ENCODE measurements at regions of chr9 and their contacts with region 1.

Region 1: DNA sequence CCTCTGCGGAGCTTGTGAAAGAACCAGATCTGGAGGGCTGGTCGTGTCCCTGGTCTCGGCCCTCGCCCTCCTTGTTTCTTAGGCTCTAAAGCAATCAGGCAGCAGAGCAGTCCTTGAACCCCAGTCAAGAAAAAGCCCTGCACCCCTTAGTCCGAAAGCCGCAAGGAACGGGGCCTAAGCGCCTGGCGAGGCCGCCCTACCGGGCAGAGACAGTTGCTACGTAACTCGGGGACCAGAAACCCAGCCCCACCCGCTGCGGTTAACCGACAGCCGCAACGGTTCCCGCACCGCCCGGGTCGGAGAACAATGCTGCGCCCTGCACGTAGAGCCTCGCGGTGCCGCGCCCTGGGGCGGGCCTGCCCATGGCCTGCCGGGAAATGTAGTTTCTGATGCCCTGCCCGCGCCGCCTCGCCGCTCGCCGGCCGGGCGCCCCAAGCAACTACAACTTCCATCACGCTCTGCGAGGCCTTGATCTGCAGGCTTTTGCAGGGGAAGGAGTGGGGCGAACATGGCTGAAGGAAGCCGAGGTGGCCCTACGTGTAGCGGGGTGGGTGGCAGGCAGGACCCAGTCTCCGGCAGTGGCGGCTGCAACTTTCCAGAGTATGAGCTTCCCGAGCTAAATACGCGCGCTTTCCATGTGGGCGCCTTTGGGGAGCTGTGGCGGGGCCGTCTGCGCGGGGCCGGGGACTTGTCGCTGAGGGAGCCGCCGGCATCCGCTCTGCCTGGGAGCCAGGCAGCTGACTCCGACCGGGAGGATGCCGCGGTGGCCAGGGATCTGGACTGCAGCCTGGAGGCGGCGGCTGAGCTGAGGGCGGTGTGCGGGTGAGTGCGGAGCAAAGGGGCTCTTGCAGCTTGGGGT is at the start of gene SNAPC3:
- DNase-seq: peak; percentile 94 to 97
- ATAC-seq: peak; percentile 99
- H3K4me3 ChIP-seq: peak within 1 kb of the TSS; percentile 98
- H3K27ac ChIP-seq: peak within 1 kb of the TSS; percentile 92
- H3K4me1 ChIP-seq: peaks cover 24% of the 10 kb centered on the region
- H3K27me3 ChIP-seq: no peaks in the 10 kb centered on the region
- CTCF ChIP-seq: no peak
- total RNA-seq, gene SNAPC3: 19.9 to 29.2 (median 20.8) TPM

Region 2: DNA sequence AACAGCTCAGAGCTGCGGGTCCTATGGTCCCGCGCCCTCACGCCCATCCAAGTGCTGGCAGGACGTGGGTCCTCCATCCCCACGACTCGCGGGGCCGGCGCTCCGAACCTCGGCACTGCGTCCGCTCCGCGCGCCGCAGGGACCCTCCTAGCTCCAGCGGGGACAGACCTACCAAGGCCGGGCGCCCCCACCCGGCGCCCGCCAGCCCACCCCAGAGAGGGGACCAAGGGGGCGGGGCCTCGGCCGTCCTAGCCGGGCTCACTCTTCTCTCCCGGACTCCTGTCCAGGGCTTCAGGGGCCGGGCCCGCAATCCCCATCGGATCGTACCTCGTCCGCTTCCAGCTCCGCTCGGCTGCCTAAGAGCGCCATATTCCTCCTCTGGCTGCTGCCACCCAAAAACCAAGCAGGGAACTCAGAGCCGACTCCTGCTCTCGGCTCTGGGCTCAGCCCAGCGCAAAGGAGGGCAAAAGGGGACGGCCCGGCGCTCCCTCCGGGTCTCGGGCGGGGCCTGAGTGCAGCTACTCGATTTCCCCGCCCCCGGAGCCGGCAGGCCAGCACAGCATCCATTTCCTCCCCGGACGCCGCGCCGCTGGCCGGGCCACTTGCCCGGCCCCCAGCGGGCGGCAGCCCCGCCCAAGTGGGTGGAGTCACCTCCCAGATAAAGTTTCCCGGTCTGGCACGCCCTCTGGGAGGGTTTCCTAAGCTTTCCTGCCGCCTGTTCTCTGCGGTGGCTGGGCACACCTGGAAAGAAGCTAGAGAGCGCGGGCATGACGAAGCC is 115.7 kb before region 1 on chr9 and contains the start of gene TTC39B:
- intact Hi-C with region 1: loop called (anchors 2 to 10 kb)
- DNase-seq: peak; percentile 94 to 96
- ATAC-seq: peak; percentile 93 to 98 (median 97)
- H3K4me3 ChIP-seq: peak within 1 kb of the TSS; percentile 81
- H3K27ac ChIP-seq: peak within 1 kb of the TSS; percentile 74
- H3K4me1 ChIP-seq: peaks cover 7% of the 10 kb centered on the region
- H3K27me3 ChIP-seq: no peaks in the 10 kb centered on the region
- CTCF ChIP-seq: no peak
- total RNA-seq, gene TTC39B: 1.8 to 13.1 (median 3.1) TPM

Region 3: GRCh38 chr9:15743512-15743911 is 320.9 kb after region 1 on chr9:
- intact Hi-C with region 1: no loop called
- DNase-seq: no peak
- ATAC-seq: no peak
- H3K4me3 ChIP-seq: no peak overlapping the region
- H3K27ac ChIP-seq: no peak overlapping the region
- H3K4me1 ChIP-seq: no peaks in the 10 kb centered on the region
- H3K27me3 ChIP-seq: no peaks in the 10 kb centered on the region
- CTCF ChIP-seq: no peak